HepG2 (cell line): ENCODE measurements at regions of chr11 and their contacts with region 1.

Region 1: DNA sequence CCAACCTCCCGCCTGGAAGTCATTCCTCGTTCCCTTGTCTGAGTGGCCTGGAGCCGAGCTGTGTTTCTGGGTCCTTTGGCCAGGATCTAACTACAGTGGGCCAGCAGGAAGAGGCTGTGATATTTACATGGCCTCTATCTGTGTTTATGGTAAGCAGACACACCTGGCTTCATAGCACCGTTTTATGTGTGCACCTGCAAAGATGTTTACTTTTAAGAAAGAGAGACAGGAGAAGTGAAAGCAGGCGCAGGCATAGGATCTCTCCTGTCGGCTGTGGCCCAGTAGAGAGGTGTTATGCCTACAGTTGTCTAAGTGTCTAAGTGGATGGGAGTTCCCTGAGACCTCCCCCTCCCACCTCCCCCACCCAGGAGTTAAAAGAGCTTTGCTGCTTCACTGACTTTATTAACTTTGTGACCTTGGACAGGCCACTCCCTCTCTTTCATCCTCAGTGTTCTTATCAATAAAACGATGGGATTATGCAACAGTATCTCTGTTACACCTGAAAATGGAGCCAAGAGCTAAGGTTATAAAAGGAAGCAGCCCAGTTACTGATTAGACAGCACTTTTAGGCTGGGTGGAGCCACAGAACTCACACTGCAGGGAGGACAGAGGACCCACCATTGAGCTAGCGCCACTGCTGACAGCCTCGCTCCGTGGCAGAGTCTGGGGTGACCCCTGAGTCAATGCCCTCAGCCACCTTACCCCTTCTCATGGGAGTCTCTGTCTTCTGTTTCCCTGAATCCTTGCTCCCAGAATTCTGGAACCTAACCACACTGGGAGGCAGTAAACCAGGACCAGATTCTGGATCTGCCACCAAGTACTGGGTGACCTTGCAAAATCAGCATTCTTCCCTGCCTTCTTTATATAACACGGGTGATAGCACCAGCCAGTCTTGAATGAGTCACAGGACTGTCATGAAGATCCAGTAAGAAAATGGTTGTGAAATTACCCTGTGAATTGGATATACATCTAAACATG is 22.0 kb downstream of the ST14 start:
- DNase-seq: peak; percentile 99
- ATAC-seq: peak; percentile 96
- H3K4me3 ChIP-seq: peak overlapping the region; percentile 35 to 66 (median 51)
- H3K27ac ChIP-seq: peak overlapping the region; percentile 97
- H3K4me1 ChIP-seq: peaks cover 45% of the 10 kb centered on the region
- H3K27me3 ChIP-seq: no peaks in the 10 kb centered on the region
- CTCF ChIP-seq: peak; percentile 49
- EP300 ChIP-seq: peak in 1 of 2 experiments; percentile 96; a peak in 2 of 4 replicates
- POLR2A ChIP-seq: peak; percentile 84 to 96
- RAD21 ChIP-seq: peak; percentile 33; the same call in 1 of the 2 replicates

Region 2: DNA sequence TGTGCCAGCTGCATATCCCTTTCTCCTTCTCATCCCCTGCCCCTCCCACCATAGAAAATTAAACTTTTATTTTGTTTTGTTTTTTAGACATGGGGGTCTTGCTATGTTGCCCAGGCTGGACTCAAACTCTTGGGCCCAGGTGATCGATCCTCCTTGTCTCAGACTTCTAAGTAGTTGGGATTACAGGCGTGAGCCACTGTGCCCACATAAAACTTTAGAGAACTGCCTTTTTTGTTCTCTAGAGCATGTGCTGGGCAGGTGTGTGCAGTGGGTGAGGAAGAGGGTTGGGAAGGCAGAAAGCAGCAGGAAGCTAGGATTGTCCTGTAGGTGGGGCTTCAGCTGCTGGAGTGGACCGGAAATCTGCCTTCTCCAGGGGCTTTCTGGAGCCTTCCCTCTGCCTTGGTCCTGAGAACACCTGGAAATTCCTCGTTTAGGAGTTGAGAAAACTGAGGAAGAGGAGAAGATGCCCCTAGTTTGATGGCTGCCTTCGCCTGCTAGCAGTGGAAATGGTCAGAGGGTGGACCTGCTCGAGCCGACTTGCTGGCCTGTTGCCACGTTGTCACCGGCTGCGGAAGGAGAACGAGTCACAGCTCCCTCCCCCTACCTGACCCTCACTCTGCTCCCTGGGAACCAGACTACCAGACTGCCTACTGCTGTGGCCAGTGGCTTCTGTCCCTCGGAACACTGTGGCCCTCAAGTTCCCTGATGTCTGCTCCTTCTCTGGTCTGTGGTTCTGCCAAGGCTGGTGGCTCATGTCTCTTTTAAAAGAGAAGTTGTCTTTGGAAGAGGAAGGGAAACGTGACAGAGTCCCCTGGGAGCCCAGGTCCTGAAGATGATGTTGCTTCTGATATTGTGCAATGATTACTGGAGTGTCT is 18.0 kb before region 1 on chr11:
- CTCF ChIA-PET with region 1: no interaction called
- POLR2A ChIA-PET with region 1: interaction called, 36 read pairs
- in situ Hi-C with region 1: no loop called
- intact Hi-C with region 1: no loop called
- DNase-seq: peak; percentile 55
- ATAC-seq: peak; percentile 88
- H3K4me3 ChIP-seq: peak overlapping the region; percentile 54 to 64 (median 59); a peak in 5 of 6 replicates
- H3K27ac ChIP-seq: peak overlapping the region; percentile 55
- H3K4me1 ChIP-seq: peaks cover 44% of the 10 kb centered on the region
- H3K27me3 ChIP-seq: no peaks in the 10 kb centered on the region; a peak in 1 of 5 replicates
- CTCF ChIP-seq: peak; percentile 66
- EP300 ChIP-seq: 0 out of 4 replicates have a peak, but pooled peaks of 1 of the 2 experiments have one; percentile 20
- POLR2A ChIP-seq: peak; percentile 53 to 58; a peak in 3 of 4 replicates
- RAD21 ChIP-seq: no peak

Region 3: GRCh38 chr11:130192845-130193267 is 11.3 kb after region 1 on chr11:
- CTCF ChIA-PET with region 1: no interaction called
- POLR2A ChIA-PET with region 1: interaction called, 33 read pairs
- in situ Hi-C with region 1: no loop called
- intact Hi-C with region 1: no loop called
- DNase-seq: peak; percentile 86
- ATAC-seq: peak; percentile 90
- H3K4me3 ChIP-seq: no peak overlapping the region; a peak in 1 of 6 replicates
- H3K27ac ChIP-seq: peak overlapping the region; percentile 72
- H3K4me1 ChIP-seq: peaks cover 50% of the 10 kb centered on the region
- H3K27me3 ChIP-seq: no peaks in the 10 kb centered on the region
- CTCF ChIP-seq: peak; percentile 24; the same call in 1 of the 2 replicates
- EP300 ChIP-seq: 0 out of 4 replicates have a peak, but pooled peaks of 1 of the 2 experiments have one; percentile 5
- POLR2A ChIP-seq: 0 out of 4 replicates have a peak, but pooled peaks of 1 of the 2 experiments have one; percentile 27
- RAD21 ChIP-seq: no peak

Region 4: DNA sequence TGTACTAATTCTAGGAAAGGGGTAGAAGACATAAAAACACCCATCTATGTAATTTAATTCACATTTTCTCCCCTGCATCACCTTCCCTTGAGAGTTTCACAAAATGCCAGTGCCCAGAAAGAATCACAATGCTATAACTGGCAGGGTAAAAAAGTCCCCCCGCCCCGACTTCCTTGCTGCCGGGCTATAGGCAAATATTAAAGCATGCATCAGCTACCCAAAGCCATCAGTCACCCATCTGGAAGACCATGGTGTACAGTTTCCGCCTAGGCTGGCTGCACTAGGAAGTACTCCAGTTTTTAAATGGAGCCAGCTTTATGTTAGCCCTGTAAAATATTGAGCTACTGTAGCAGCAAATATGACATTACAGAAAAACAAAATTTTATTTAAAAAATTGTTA is 45.8 kb after region 1 on chr11:
- CTCF ChIA-PET with region 1: no interaction called
- POLR2A ChIA-PET with region 1: no interaction called
- in situ Hi-C with region 1: no loop called
- intact Hi-C with region 1: no loop called
- DNase-seq: no peak
- ATAC-seq: no peak
- H3K4me3 ChIP-seq: no peak overlapping the region
- H3K27ac ChIP-seq: no peak overlapping the region
- H3K4me1 ChIP-seq: peaks cover 10% of the 10 kb centered on the region
- H3K27me3 ChIP-seq: no peaks in the 10 kb centered on the region; a peak in 1 of 5 replicates
- CTCF ChIP-seq: no peak
- EP300 ChIP-seq: no peak
- POLR2A ChIP-seq: no peak
- RAD21 ChIP-seq: no peak

Region 5: DNA sequence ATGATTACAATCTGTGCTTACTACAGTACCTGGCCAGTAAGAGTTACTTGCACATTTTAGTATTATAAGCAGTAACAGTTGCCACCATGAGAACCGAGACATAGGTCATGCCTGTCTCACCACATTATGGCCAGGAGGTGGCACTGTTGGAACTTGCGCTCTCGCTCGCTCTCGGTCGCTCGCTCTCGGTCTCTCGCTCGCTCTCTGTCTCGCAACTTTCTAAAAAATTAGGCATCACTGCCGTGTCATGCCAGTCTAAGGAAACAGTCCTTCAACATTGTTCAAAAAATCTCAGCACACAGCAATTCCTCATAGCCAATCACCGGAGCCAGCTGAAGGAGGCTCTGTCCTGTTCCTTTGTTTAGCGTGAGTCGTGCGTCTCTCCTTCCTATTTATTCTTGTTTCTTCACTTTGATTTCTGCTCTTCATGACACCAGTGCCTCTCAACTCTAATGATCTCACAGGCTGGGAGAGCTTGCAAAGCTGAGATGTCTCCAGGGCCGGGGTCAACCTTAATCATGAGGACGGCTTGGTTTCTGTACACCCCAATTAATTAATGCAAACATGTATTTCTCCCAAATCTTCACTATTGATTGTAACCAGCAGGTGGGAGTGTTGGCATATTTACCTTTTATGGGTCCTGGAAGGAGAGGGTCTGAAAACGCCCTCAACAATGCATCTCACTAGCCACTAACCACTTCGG is 253.1 kb after region 1 on chr11:
- CTCF ChIA-PET with region 1: no interaction called
- POLR2A ChIA-PET with region 1: no interaction called
- in situ Hi-C with region 1: no loop called
- intact Hi-C with region 1: no loop called
- DNase-seq: peak; percentile 63
- ATAC-seq: peak; percentile 90
- H3K4me3 ChIP-seq: peak overlapping the region; percentile 50 to 73 (median 58)
- H3K27ac ChIP-seq: no peak overlapping the region
- H3K4me1 ChIP-seq: no peaks in the 10 kb centered on the region
- H3K27me3 ChIP-seq: peaks cover 0 to 12% of the 10 kb centered on the region in 2 experiments; a peak in 4 of 5 replicates
- CTCF ChIP-seq: peak; percentile 83
- EP300 ChIP-seq: no peak
- POLR2A ChIP-seq: no peak
- RAD21 ChIP-seq: peak; percentile 42